CD4-positive, alpha-beta memory T cell (primary cell): ENCODE measurements at regions of chr21 and their contacts with region 1.

Region 1: GRCh38 chr21:42117229-42117966 is 46.3 kb downstream of the UMODL1 start:
- DNase-seq: peak; percentile 48 to 72 (median 64)
- H3K4me3 ChIP-seq: no peak overlapping the region
- H3K4me3 Mint-ChIP-seq: peak overlapping the region in 4 of 8 donors; percentile 32 to 68 (median 58)
- H3K27ac ChIP-seq: no peak overlapping the region
- H3K27ac Mint-ChIP-seq: peak overlapping the region in 2 of 7 donors; percentile 1 to 41
- H3K4me1 ChIP-seq: peaks cover 4% of the 10 kb centered on the region
- H3K4me1 Mint-ChIP-seq: peaks cover 7 to 10% (median 9%) of the 10 kb centered on the region in 4 donors
- H3K27me3 ChIP-seq: peaks cover 18% of the 10 kb centered on the region
- H3K27me3 Mint-ChIP-seq: peaks cover 43 to 49% of the 10 kb centered on the region in 2 donors

Region 2: GRCh38 chr21:41816220-41817165 is 300.9 kb before region 1 on chr21:
- CTCF ChIA-PET with region 1: interaction called, 68 read pairs
- POLR2A ChIA-PET with region 1: interaction called, 4 read pairs
- intact Hi-C with region 1: no loop called
- DNase-seq: peak; percentile 41 to 54 (median 46)
- H3K4me3 ChIP-seq: no peak overlapping the region
- H3K4me3 Mint-ChIP-seq: no peak overlapping the region
- H3K27ac ChIP-seq: no peak overlapping the region
- H3K27ac Mint-ChIP-seq: peak overlapping the region in 2 of 7 donors; percentile 31 to 47
- H3K4me1 ChIP-seq: no peaks in the 10 kb centered on the region
- H3K4me1 Mint-ChIP-seq: peaks cover 0 to 8% (median 2%) of the 10 kb centered on the region in 4 donors
- H3K27me3 ChIP-seq: no peaks in the 10 kb centered on the region
- H3K27me3 Mint-ChIP-seq: no peaks in the 10 kb centered on the region

Region 3: DNA sequence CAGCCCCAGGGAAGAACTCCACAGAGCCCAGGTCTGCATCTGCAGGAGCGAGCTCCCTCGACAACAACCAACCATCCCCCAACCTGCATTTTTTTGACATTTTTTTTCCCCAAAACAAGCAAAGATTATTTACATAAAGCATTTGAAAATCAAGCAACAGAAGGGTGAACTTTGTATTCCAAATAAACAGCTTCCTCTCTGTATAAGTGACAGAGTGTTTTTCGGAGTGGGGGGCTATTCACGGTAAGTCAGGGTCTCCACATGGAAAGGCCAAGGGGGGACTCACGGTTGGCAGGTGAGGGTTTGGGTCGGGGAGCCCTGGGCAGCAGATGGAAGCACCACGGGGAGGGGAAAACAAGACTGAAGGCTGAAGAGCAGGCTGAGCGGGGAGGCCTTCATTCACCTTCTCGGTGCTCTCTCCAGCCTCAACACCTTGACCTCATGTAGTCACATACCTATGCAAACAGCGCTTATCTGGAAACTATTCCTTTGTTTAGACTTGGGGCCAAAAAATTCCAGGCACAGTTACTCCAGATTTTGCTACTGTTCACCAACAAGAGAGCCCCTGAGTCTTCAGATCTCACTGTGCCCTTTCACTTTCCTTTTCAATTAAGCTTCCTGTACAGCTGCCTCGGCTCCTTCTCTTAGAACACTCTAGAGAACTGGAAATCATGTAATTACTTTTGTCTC is 191.1 kb before region 1 on chr21:
- CTCF ChIA-PET with region 1: interaction called, 12 read pairs
- POLR2A ChIA-PET with region 1: no interaction called
- intact Hi-C with region 1: no loop called
- DNase-seq: peak; percentile 48 to 70 (median 60)
- H3K4me3 ChIP-seq: peak overlapping the region; percentile 45 to 66
- H3K4me3 Mint-ChIP-seq: peak overlapping the region; percentile 93 to 100 (median 96)
- H3K27ac ChIP-seq: peak overlapping the region; percentile 74
- H3K27ac Mint-ChIP-seq: peak overlapping the region; percentile 90 to 100 (median 99)
- H3K4me1 ChIP-seq: peaks cover 37% of the 10 kb centered on the region
- H3K4me1 Mint-ChIP-seq: peaks cover 27 to 48% (median 36%) of the 10 kb centered on the region in 4 donors
- H3K27me3 ChIP-seq: no peaks in the 10 kb centered on the region
- H3K27me3 Mint-ChIP-seq: peaks cover 0 to 2% of the 10 kb centered on the region in 2 donors

Region 4: DNA sequence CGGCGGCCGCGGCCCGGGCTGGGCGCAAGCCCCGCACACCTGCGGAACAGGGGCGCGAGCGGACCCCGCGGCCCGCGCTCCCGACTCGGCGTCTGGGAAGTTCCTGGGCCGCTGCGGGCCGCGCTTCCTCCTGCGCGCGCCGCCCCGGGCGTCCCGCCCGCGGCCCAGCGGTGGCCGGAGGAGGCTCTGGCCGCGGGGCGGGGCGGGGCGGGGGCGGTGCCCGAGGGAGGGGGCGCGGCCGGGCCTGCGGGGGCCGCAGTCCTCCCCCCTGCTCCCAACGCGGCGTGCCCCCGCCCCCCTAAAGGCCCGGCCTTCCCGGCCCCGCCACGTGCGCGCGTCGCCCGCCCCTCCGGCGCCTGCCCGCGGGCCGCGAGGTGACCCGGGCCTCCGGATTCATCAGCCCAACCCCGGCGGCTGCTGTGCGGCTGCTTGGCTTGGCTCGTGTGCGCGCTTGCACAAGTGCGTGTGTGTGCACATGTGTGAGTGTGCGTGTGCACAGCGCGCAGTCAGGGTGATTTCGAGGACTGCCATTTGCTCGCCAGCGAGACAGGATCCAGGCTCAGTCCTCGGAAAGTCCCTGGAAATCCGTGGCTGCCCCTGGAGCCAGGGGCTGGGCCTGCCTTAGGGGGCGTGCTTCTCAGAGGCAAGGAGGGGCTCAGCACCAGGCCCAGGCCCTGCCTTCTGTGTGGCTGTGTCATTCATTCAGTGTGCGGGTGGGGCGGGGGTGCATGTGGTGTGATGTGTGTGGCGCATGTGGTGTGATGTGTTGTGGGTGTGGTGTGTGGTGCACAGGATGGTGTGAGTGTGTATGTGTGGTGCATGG is 163.4 kb before region 1 on chr21 and contains the start of gene C2CD2:
- CTCF ChIA-PET with region 1: no interaction called
- POLR2A ChIA-PET with region 1: no interaction called
- intact Hi-C with region 1: no loop called
- DNase-seq: no peak
- H3K4me3 ChIP-seq: no peak within 1 kb of the TSS
- H3K4me3 Mint-ChIP-seq: peak within 1 kb of the TSS; percentile 51 to 75 (median 63)
- H3K27ac ChIP-seq: no peak within 1 kb of the TSS
- H3K27ac Mint-ChIP-seq: peak within 1 kb of the TSS in 2 of 7 donors; percentile 32 to 39
- H3K4me1 ChIP-seq: peaks cover 6% of the 10 kb centered on the region
- H3K4me1 Mint-ChIP-seq: peaks cover 3 to 16% (median 7%) of the 10 kb centered on the region in 4 donors
- H3K27me3 ChIP-seq: no peaks in the 10 kb centered on the region
- H3K27me3 Mint-ChIP-seq: peaks cover 11 to 26% of the 10 kb centered on the region in 2 donors
- total RNA-seq, gene C2CD2: 10.5 to 11.0 TPM

Region 5: GRCh38 chr21:41973861-41974751 is 143.3 kb before region 1 on chr21:
- CTCF ChIA-PET with region 1: interaction called, 3 read pairs
- POLR2A ChIA-PET with region 1: no interaction called
- intact Hi-C with region 1: loop called (anchors 2 kb)
- DNase-seq: peak in 4 of 5 donors; percentile 14 to 18 (median 14)
- H3K4me3 ChIP-seq: peak overlapping the region in 1 of 2 donors; percentile 1
- H3K4me3 Mint-ChIP-seq: peak overlapping the region; percentile 44 to 66 (median 54)
- H3K27ac ChIP-seq: no peak overlapping the region
- H3K27ac Mint-ChIP-seq: peak overlapping the region in 6 of 7 donors; percentile 10 to 89 (median 62)
- H3K4me1 ChIP-seq: peaks cover 16% of the 10 kb centered on the region
- H3K4me1 Mint-ChIP-seq: peaks cover 7 to 25% (median 11%) of the 10 kb centered on the region in 4 donors
- H3K27me3 ChIP-seq: no peaks in the 10 kb centered on the region
- H3K27me3 Mint-ChIP-seq: no peaks in the 10 kb centered on the region

Region 6: DNA sequence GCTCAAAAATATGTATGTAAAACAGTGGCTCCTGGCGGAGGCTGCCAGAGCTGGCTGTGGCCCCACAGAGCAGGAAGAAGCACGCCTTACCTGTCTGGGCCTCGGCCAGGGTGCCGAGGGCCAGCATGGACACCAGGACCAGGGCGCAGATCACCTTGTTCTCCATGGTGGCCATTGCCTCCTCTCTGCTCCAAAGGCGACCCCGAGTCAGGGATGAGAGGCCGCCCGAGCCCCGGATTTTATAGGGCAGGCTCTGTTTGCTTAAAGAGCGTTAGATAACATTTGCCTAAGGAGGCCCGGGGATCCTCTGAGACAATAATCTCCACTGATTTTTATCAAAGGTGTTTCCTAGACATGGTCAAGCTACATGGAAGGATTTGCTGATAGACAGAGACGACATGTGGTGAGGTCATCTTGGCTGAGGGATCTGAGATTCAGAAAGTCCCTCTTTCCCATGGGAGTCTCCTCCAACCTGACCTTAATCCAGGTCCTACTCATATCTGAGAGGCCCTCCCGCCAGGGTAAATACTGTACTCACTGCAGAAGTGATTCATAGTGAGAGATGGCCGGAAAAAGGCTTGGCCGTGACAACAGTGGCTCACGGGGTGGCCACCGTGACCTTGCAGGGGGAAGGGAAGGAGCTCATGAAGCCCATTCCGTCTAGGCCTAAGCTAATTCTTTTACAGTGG is 249.1 kb after region 1 on chr21 and contains the start of gene TFF1:
- CTCF ChIA-PET with region 1: no interaction called
- POLR2A ChIA-PET with region 1: no interaction called
- intact Hi-C with region 1: no loop called
- DNase-seq: no peak
- H3K4me3 ChIP-seq: no peak within 1 kb of the TSS
- H3K4me3 Mint-ChIP-seq: no peak within 1 kb of the TSS
- H3K27ac ChIP-seq: no peak within 1 kb of the TSS
- H3K27ac Mint-ChIP-seq: peak within 1 kb of the TSS in 1 of 7 donors; percentile 19
- H3K4me1 ChIP-seq: no peaks in the 10 kb centered on the region
- H3K4me1 Mint-ChIP-seq: no peaks in the 10 kb centered on the region
- H3K27me3 ChIP-seq: no peaks in the 10 kb centered on the region
- H3K27me3 Mint-ChIP-seq: peaks cover 1 to 2% of the 10 kb centered on the region in 2 donors
- total RNA-seq, gene TFF1: not detected